ENCODE measurements at regions of chr15 and their contacts with region 1.

Region 1: DNA sequence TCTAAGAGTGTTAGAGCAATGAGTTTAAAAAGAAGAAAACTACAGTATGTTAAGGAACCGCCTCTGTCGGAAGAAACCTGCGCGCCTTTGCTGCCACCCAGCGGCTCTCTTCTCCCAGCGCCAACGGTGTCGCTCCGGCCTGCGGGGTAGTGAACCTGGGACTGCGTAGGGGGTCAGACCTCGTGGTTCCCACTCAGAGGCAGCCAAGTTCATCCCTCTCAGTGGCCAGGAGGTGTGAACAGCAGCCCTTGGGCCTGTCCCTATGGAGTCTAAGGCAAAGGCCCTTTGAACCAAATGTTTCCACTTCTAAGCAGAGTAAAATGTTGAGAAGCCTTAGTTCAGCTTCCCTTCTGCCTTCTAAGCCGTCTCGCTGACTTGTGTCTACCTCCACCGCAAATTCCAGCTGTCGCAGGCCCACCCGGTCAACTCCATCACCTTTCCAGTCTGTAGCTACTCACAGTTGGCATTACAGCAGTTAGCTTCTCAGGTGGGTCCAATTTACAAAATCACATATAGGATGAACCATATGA is 980 bp upstream of the RAB27A start:
- DNase-seq: peak; percentile 40 to 92
- H3K4me3 ChIP-seq: peak overlapping the region; percentile 60 to 95
- H3K27ac ChIP-seq: peak overlapping the region; percentile 90 to 96
- H3K4me1 ChIP-seq: peaks cover 0 to 7% of the 10 kb centered on the region in 2 donors
- H3K27me3 ChIP-seq: no peaks in the 10 kb centered on the region
- CTCF ChIP-seq: peak; percentile 85 to 93 (median 87)

Region 2: GRCh38 chr15:55196458-55197361 is 93.9 kb before region 1 on chr15 and contains the start of gene RSL24D1:
- intact Hi-C with region 1: loop called (anchors 1 kb)
- DNase-seq: peak; percentile 87 to 99
- H3K4me3 ChIP-seq: peak within 1 kb of the TSS; percentile 82 to 95
- H3K27ac ChIP-seq: peak within 1 kb of the TSS; percentile 90 to 96
- H3K4me1 ChIP-seq: peaks cover 4 to 14% of the 10 kb centered on the region in 2 donors
- H3K27me3 ChIP-seq: no peaks in the 10 kb centered on the region
- CTCF ChIP-seq: peak; percentile 48 to 57 (median 49)
- total RNA-seq, gene RSL24D1: 15.3 TPM

Region 3: DNA sequence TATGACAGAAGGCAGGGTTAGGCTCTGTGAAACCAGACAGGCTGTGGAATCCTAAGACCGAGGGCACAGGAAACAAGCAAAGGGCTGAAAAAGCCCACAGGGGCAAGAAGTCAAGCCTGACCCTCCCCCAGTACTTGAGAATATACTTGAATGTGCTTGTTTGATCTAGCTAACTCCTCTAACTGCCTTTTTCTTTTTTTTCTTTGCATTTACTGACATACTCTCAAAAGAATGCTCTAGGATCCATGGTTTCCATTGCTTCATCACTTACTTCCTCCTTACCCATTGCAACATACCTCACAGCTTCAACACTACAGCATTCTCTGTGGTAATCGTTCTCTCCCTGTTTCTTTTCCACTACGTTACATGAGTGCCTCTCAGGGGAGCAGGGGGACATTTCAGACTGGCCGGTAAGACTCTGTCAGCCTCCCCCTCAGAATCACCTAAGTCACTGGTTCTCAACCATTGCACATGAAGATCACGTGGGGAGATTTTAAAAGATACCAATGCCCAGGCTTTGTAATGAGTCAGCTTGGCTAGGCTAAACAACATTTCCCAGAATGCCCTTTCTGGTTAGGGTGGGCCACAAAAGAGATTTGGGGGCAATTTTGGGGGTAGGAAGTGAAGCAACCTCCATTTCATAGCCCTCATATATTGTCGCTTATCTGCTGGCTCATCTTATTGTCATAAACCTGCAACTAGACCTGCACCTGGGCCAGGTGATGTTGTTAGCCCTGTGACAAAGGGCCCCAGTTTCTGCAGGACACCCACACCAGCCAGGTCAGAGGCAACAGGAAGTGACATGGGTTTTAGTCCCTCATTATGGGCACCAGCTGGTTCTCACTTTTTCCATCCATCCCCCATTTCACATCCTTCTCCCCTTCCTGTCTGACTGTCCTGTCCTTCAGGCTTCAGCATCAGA is 69.2 kb before region 1 on chr15:
- intact Hi-C with region 1: loop called (anchors 1 kb)
- DNase-seq: peak in 1 of 2 donors; percentile 66
- H3K4me3 ChIP-seq: no peak overlapping the region
- H3K27ac ChIP-seq: peak overlapping the region; percentile 76 to 87
- H3K4me1 ChIP-seq: peaks cover 0 to 4% of the 10 kb centered on the region in 2 donors
- H3K27me3 ChIP-seq: no peaks in the 10 kb centered on the region
- CTCF ChIP-seq: no peak

Region 4: DNA sequence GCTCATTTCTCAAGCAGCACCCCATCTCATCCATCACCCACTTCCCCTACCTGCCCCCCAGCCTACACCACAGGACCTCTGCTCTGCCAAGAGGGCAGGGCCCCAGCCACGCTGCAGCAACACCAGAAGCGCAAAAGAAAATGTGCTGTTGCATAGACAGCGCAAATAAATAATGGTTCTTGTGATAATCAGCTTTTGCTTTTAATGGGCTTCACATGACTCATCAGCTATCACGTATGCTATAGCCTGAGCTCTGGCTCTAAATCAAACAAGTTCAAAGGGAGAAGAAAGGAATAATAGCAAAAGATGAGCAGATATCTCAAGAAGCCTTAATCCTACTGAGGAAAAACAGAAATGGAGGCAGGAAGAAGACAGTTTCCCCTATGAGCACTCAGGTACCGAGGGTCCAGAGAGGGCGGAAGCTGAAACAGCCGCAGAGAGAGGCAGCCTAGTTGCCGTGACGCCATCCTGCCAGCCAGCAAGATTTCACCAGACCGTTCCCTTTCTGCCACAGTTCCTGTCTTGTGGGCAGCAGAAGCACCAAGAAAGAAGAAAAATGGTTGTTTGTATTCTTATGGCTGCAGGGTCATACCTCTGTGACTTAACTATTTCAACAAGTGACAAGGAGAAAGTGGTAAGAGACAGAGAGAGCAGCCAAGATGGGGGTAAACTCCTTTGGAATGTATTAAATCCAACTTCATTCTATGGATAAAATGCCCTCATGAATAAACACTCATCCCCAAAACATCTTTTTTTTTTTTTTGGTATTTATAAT is 23.0 kb before region 1 on chr15:
- intact Hi-C with region 1: no loop called
- DNase-seq: peak; percentile 24 to 75
- H3K4me3 ChIP-seq: no peak overlapping the region
- H3K27ac ChIP-seq: no peak overlapping the region
- H3K4me1 ChIP-seq: no peaks in the 10 kb centered on the region
- H3K27me3 ChIP-seq: no peaks in the 10 kb centered on the region
- CTCF ChIP-seq: no peak

Region 5: GRCh38 chr15:55318588-55319494 is 28.2 kb after region 1 on chr15 and contains the starts of genes PIGB and PIGBOS1:
- intact Hi-C with region 1: loop called (anchors 1 kb)
- DNase-seq: peak; percentile 39 to 90
- H3K4me3 ChIP-seq: peak within 1 kb of the TSS; percentile 65 to 71
- H3K27ac ChIP-seq: peak within 1 kb of the TSS; percentile 89
- H3K4me1 ChIP-seq: peaks cover 0 to 17% of the 10 kb centered on the region in 2 donors
- H3K27me3 ChIP-seq: no peaks in the 10 kb centered on the region
- CTCF ChIP-seq: peak; percentile 6 to 15 (median 9)
- total RNA-seq, gene PIGB: 50.3 TPM
- total RNA-seq, gene PIGBOS1: 4.7 TPM

Region 6: DNA sequence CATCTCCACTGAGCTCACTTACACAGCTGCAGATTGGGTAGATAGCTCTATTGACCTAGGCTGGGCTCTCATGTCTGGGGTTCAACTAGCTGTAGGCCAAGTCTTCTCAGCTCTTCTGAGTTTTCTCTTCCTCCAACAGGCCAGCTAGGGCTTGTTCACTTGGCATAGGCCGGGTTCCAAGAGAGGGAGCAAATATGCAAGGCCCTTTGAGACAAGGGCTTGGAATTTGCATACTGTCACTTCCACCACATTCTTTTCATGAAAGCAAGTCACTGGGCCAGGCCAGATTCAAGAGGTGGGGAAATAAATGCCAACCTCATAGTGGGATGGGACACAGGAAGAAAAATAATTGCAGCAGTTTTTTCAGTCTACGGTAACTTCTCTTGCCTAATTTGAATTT is 53.6 kb after region 1 on chr15:
- intact Hi-C with region 1: no loop called
- DNase-seq: peak in 1 of 2 donors; percentile 64
- H3K4me3 ChIP-seq: no peak overlapping the region
- H3K27ac ChIP-seq: peak overlapping the region; percentile 65 to 73
- H3K4me1 ChIP-seq: peaks cover 5 to 20% of the 10 kb centered on the region in 2 donors
- H3K27me3 ChIP-seq: no peaks in the 10 kb centered on the region
- CTCF ChIP-seq: no peak

Region 7: DNA sequence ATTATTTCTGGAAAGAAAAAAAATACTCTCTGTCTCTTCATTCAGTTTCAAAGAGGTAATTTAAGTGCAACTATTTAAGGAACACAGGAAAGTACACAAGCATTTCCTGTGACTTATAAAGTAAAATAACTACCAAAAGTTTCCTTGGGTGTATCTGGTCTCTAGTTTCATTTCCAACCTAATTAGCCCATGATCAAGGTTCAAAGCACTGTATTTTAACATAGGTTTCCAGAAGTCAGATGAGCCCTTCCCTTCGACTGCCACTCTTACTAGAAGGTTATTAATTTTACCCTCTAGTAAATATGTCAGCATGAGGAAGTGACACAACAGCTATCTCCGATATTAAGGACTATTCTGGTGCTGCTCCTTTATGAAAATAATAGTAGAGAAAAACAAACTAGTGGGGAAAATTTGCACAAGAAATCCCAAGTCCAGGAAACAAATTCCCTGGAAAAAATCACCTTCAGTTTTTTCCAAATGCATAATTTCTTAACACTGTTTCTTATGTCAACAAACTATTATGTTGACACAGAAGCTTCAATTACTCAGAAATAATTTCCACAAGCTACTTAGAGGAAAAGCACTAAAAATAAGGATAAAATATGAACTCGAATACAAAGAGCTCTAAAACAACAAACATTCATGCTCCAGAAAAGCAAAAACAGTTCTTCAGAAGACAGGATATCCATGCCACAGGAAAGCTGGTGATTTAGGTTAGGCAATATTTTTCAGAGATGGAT is 82.3 kb after region 1 on chr15:
- intact Hi-C with region 1: no loop called
- DNase-seq: no peak
- H3K4me3 ChIP-seq: no peak overlapping the region
- H3K27ac ChIP-seq: peak overlapping the region; percentile 14 to 51
- H3K4me1 ChIP-seq: peaks cover 0 to 5% of the 10 kb centered on the region in 2 donors
- H3K27me3 ChIP-seq: no peaks in the 10 kb centered on the region
- CTCF ChIP-seq: no peak

Region 8: DNA sequence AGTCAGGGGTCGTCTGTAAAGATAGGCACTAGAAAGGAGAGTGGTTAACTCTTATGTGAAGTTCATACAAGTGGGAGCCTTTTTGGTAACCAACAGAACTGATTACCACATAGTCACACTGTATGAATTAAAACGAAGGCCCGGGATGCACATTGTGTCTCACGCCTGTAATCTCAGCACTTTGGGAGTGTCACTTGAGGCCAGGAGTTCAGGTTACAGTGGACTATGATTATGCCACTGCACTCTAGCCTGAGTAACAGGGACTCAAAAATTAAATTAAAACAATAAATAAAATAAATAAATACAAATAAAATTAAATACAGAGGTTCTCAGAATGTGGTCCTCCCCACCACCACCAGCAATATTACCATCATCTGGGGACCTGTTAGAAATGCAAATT is 217.0 kb after region 1 on chr15:
- intact Hi-C with region 1: no loop called
- DNase-seq: no peak
- H3K4me3 ChIP-seq: no peak overlapping the region
- H3K27ac ChIP-seq: no peak overlapping the region
- H3K4me1 ChIP-seq: no peaks in the 10 kb centered on the region
- H3K27me3 ChIP-seq: no peaks in the 10 kb centered on the region
- CTCF ChIP-seq: no peak